Colonic mucosa (tissue), 4 donors: ENCODE measurements at regions of chr14 and their contacts with region 1.

Region 1: GRCh38 chr14:91177073-91178034 is 63.5 kb downstream of the DGLUCY start:
- DNase-seq: peak; percentile 49
- H3K4me3 ChIP-seq: no peak overlapping the region
- H3K27ac ChIP-seq: no peak overlapping the region
- H3K4me1 ChIP-seq: no peaks in the 10 kb centered on the region
- H3K27me3 ChIP-seq: no peaks in the 10 kb centered on the region
- CTCF ChIP-seq: peak; percentile 66

Region 2: GRCh38 chr14:90903101-90903500 is 274.3 kb before region 1 on chr14:
- intact Hi-C with region 1: loop called (anchors 2 kb)
- DNase-seq: peak; percentile 74
- H3K4me3 ChIP-seq: no peak overlapping the region
- H3K27ac ChIP-seq: no peak overlapping the region
- H3K4me1 ChIP-seq: no peaks in the 10 kb centered on the region
- H3K27me3 ChIP-seq: no peaks in the 10 kb centered on the region
- CTCF ChIP-seq: peak; percentile 60

Region 3: DNA sequence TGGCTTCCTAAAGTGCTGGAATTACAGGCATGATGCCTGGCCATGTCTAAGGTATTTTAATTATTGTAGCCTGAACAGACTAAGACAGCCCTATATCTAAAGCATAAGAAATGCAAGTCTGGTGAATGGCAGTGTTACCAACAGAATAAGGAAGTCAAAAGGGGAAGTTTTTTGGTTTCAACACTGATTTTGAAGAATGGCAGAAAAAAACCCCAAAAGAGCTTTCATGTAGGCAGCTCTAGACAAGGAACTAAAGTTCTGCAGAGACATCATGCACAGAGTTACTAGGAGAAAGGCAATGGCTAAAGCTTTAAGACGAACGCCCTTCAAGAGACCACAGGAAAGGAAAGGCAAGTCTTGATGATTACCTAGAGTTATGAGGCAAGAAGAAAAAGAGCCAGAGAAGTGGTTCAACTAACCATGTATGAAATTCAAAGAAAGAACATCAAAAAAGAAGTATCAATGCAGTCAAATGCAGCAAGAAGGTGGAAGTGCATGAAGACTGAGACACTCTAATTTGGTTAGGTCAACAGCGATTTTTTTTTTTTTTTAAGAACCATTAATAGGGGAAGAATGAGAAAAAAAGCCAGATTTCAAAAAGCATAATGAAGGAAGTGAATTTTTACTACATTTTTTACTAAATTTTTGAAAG is 167.7 kb before region 1 on chr14:
- intact Hi-C with region 1: no loop called
- DNase-seq: no peak
- H3K4me3 ChIP-seq: no peak overlapping the region
- H3K27ac ChIP-seq: peak overlapping the region; percentile 6
- H3K4me1 ChIP-seq: no peaks in the 10 kb centered on the region
- H3K27me3 ChIP-seq: no peaks in the 10 kb centered on the region
- CTCF ChIP-seq: no peak

Region 4: GRCh38 chr14:91059576-91060350 is 117.6 kb before region 1 on chr14:
- intact Hi-C with region 1: loop called (anchors 5 kb)
- DNase-seq: peak; percentile 61
- H3K4me3 ChIP-seq: peak overlapping the region; percentile 79
- H3K27ac ChIP-seq: peak overlapping the region; percentile 96
- H3K4me1 ChIP-seq: no peaks in the 10 kb centered on the region
- H3K27me3 ChIP-seq: no peaks in the 10 kb centered on the region
- CTCF ChIP-seq: no peak

Region 5: DNA sequence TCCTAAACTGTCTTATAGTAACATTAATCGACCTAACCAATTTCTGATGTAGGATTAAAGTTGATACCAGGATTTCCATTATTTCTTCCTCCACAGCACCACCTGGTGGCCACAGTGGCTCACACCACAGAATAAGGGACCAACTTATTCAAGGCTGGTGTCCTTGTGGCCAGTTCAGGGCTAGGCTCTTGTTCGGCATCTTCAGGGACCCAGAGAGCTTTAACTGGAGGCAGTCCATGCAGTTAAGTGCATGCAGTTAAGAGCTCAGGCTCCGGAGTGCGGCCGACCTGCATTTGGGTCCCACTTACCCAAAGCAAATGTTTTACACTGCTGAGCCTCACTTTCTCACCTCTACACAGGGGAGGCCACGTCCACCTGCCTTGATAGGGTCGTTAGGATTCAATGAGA is 109.2 kb after region 1 on chr14:
- intact Hi-C with region 1: loop called (anchors 2 kb)
- DNase-seq: peak; percentile 85
- H3K4me3 ChIP-seq: no peak overlapping the region
- H3K27ac ChIP-seq: no peak overlapping the region
- H3K4me1 ChIP-seq: no peaks in the 10 kb centered on the region
- H3K27me3 ChIP-seq: no peaks in the 10 kb centered on the region
- CTCF ChIP-seq: peak; percentile 85

Region 6: GRCh38 chr14:91493169-91493568 is 315.8 kb after region 1 on chr14:
- intact Hi-C with region 1: no loop called
- DNase-seq: no peak
- H3K4me3 ChIP-seq: no peak overlapping the region
- H3K27ac ChIP-seq: no peak overlapping the region
- H3K4me1 ChIP-seq: peaks cover 4% of the 10 kb centered on the region
- H3K27me3 ChIP-seq: no peaks in the 10 kb centered on the region
- CTCF ChIP-seq: no peak